ENCODE measurements at regions of chr5 and their contacts with region 1.

Region 1: GRCh38 chr5:73792687-73793320 is 166.8 kb downstream of the ARHGEF28 start:
- DNase-seq: peak; percentile 42 to 92 (median 80)

Region 2: DNA sequence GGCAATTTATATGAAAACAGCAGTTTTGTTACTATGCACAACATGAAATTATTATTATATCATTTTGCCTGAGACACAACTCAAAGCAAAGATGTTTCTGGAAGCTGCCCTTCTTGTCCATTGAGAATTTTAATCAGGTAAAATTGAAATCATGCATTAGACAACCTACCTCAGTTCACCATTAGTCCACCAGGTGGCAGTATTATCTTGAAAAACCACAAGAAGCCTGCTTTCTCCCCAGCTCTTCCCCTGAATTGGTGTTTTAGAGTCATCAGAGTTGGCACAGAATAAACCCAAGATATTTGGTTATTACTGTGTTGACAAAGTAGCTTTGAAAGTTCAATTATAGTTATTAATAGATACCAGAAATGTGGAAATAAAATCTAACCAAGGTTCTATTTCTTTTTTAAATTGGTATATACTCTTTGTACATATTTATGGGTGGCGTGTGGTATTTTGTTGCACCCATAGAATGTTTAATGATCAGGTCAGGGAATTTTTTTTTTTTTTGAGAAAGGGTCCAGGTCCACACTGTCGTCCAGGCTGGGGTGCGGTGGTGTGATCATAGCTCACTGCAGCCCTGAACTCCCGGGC is 201.6 kb before region 1 on chr5:
- intact Hi-C with region 1: loop called (anchors 5 kb)
- DNase-seq: peak in 22 of 42 donors; percentile 7 to 85 (median 64)

Measured in head of caudate nucleus (tissue), 42 donors.